ENCODE measurements at regions of chr2 and their contacts with region 1.

Region 1: GRCh38 chr2:6877402-6878304 is at the start of gene RSAD2:
- DNase-seq: peak; percentile 58
- H3K4me3 Mint-ChIP-seq: peak within 1 kb of the TSS; percentile 87
- H3K27ac Mint-ChIP-seq: peak within 1 kb of the TSS; percentile 89
- H3K4me1 Mint-ChIP-seq: peaks cover 60% of the 10 kb centered on the region
- H3K27me3 Mint-ChIP-seq: peaks cover 2% of the 10 kb centered on the region
- total RNA-seq, gene RSAD2: 119 to 120 TPM

Region 2: DNA sequence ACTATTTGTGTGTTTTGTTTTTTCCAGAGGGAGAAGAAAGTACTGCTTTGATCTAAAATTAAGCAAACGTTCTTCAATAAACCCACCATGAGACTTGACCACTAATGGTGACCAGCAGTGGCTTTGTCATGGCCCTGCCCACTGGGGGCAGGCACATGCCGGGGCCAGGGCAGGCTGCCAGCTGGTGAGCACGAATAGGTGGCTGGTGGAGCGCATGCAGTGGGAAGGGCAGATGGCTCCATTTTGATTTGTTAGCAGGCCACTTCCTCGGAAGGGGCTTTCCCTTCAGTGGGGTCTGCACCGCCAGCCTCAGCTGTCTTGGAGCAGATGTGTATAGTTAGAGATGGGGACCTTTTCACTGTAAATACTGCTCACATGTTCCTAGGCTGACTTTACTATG is 908.4 kb before region 1 on chr2:
- CTCF ChIA-PET with region 1: no interaction called
- POLR2A ChIA-PET with region 1: no interaction called
- DNase-seq: no peak
- H3K4me3 Mint-ChIP-seq: no peak overlapping the region
- H3K27ac Mint-ChIP-seq: no peak overlapping the region
- H3K4me1 Mint-ChIP-seq: no peaks in the 10 kb centered on the region
- H3K27me3 Mint-ChIP-seq: no peaks in the 10 kb centered on the region

Region 3: GRCh38 chr2:6860296-6860695 is 17.4 kb before region 1 on chr2:
- CTCF ChIA-PET with region 1: interaction called, 143 read pairs
- POLR2A ChIA-PET with region 1: interaction called, 221 read pairs
- DNase-seq: no peak
- H3K4me3 Mint-ChIP-seq: no peak overlapping the region
- H3K27ac Mint-ChIP-seq: no peak overlapping the region
- H3K4me1 Mint-ChIP-seq: peaks cover 75% of the 10 kb centered on the region
- H3K27me3 Mint-ChIP-seq: no peaks in the 10 kb centered on the region

Region 4: DNA sequence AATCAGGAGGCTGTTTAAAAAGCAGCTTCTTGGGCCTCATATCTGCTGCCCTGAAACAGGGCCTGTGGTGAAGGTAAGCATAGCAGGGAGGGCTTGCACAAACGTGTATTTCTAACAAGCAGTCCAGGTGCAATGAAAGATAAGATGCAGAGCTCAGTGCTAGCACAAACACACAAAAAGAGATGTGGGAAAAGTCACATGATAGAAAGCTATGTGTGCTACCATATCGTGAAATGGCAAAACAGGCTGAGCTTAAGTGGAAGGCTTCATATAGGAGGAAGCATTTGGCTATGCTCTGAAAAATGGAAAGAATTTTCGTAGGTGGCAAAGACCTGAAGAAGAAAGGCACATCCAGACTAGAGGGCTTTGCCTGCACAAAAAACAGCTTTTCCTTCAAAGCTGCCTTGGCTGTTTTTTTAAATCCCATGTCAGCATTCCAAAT is 10.1 kb after region 1 on chr2:
- CTCF ChIA-PET with region 1: interaction called, 3 read pairs
- POLR2A ChIA-PET with region 1: interaction called, 11 read pairs
- DNase-seq: no peak
- H3K4me3 Mint-ChIP-seq: no peak overlapping the region
- H3K27ac Mint-ChIP-seq: no peak overlapping the region
- H3K4me1 Mint-ChIP-seq: peaks cover 10% of the 10 kb centered on the region
- H3K27me3 Mint-ChIP-seq: no peaks in the 10 kb centered on the region

Region 5: GRCh38 chr2:6909431-6910385 is 32.1 kb after region 1 on chr2:
- CTCF ChIA-PET with region 1: interaction called, 29 read pairs
- POLR2A ChIA-PET with region 1: interaction called, 11 read pairs
- DNase-seq: peak; percentile 66
- H3K4me3 Mint-ChIP-seq: peak overlapping the region; percentile 25
- H3K27ac Mint-ChIP-seq: peak overlapping the region; percentile 67
- H3K4me1 Mint-ChIP-seq: peaks cover 81% of the 10 kb centered on the region
- H3K27me3 Mint-ChIP-seq: peaks cover 56% of the 10 kb centered on the region

Region 6: GRCh38 chr2:7044261-7045250 is 166.9 kb after region 1 on chr2:
- CTCF ChIA-PET with region 1: interaction called, 15 read pairs
- POLR2A ChIA-PET with region 1: no interaction called
- DNase-seq: peak; percentile 62
- H3K4me3 Mint-ChIP-seq: no peak overlapping the region
- H3K27ac Mint-ChIP-seq: no peak overlapping the region
- H3K4me1 Mint-ChIP-seq: peaks cover 3% of the 10 kb centered on the region
- H3K27me3 Mint-ChIP-seq: no peaks in the 10 kb centered on the region